Mammary epithelial cell (primary cell): ENCODE measurements at regions of chr12 and their contacts with region 1.

Region 1: GRCh38 chr12:59491877-59492276 is 104.0 kb upstream of the SLC16A7 start:
- DNase-seq: no peak
- H3K4me3 ChIP-seq: no peak overlapping the region
- H3K27ac ChIP-seq: no peak overlapping the region
- H3K4me1 ChIP-seq: no peaks in the 10 kb centered on the region
- H3K27me3 ChIP-seq: no peaks in the 10 kb centered on the region
- CTCF ChIP-seq: no peak

Region 2: GRCh38 chr12:59431266-59431665 is 60.6 kb before region 1 on chr12:
- CTCF ChIA-PET with region 1: no interaction called
- dilution Hi-C with region 1: no loop called
- in situ Hi-C with region 1: no loop called
- intact Hi-C with region 1: no loop called
- DNase-seq: no peak
- H3K4me3 ChIP-seq: no peak overlapping the region
- H3K27ac ChIP-seq: no peak overlapping the region
- H3K4me1 ChIP-seq: no peaks in the 10 kb centered on the region
- H3K27me3 ChIP-seq: no peaks in the 10 kb centered on the region
- CTCF ChIP-seq: peak in 1 of 2 donors; percentile 35

Region 3: GRCh38 chr12:59452259-59452658 is 39.6 kb before region 1 on chr12:
- CTCF ChIA-PET with region 1: no interaction called
- dilution Hi-C with region 1: no loop called
- in situ Hi-C with region 1: no loop called
- intact Hi-C with region 1: no loop called
- DNase-seq: peak; percentile 77
- H3K4me3 ChIP-seq: no peak overlapping the region
- H3K27ac ChIP-seq: no peak overlapping the region
- H3K4me1 ChIP-seq: peaks cover 5% of the 10 kb centered on the region
- H3K27me3 ChIP-seq: no peaks in the 10 kb centered on the region
- CTCF ChIP-seq: no peak

Region 4: GRCh38 chr12:60644076-60644475 is 1152.2 kb after region 1 on chr12:
- CTCF ChIA-PET with region 1: no interaction called
- dilution Hi-C with region 1: no loop called
- in situ Hi-C with region 1: no loop called
- intact Hi-C with region 1: loop called (anchors 5 kb)
- DNase-seq: no peak
- H3K4me3 ChIP-seq: no peak overlapping the region
- H3K27ac ChIP-seq: no peak overlapping the region
- H3K4me1 ChIP-seq: no peaks in the 10 kb centered on the region
- H3K27me3 ChIP-seq: no peaks in the 10 kb centered on the region
- CTCF ChIP-seq: no peak